GM23248 (cell line): ENCODE measurements at regions of chr3 and their contacts with region 1.

Region 1: GRCh38 chr3:42229942-42230688 is 35.9 kb downstream of the CCK start:
- DNase-seq: peak; percentile 82
- H3K4me3 ChIP-seq: peak overlapping the region; percentile 69
- H3K27ac ChIP-seq: no peak overlapping the region
- H3K4me1 ChIP-seq: no peaks in the 10 kb centered on the region
- H3K27me3 ChIP-seq: no peaks in the 10 kb centered on the region

Region 2: GRCh38 chr3:41863024-41863423 is 367.1 kb before region 1 on chr3:
- in situ Hi-C with region 1: no loop called
- DNase-seq: no peak
- H3K4me3 ChIP-seq: no peak overlapping the region
- H3K27ac ChIP-seq: no peak overlapping the region
- H3K4me1 ChIP-seq: no peaks in the 10 kb centered on the region
- H3K27me3 ChIP-seq: no peaks in the 10 kb centered on the region

Region 3: GRCh38 chr3:41955192-41955591 is 274.9 kb before region 1 on chr3:
- in situ Hi-C with region 1: no loop called
- DNase-seq: no peak
- H3K4me3 ChIP-seq: no peak overlapping the region
- H3K27ac ChIP-seq: no peak overlapping the region
- H3K4me1 ChIP-seq: no peaks in the 10 kb centered on the region
- H3K27me3 ChIP-seq: no peaks in the 10 kb centered on the region

Region 4: GRCh38 chr3:42425736-42426407 is 195.8 kb after region 1 on chr3:
- in situ Hi-C with region 1: no loop called
- DNase-seq: no peak
- H3K4me3 ChIP-seq: no peak overlapping the region
- H3K27ac ChIP-seq: no peak overlapping the region
- H3K4me1 ChIP-seq: no peaks in the 10 kb centered on the region
- H3K27me3 ChIP-seq: no peaks in the 10 kb centered on the region; the same call in 1 of the 2 replicates

Region 5: GRCh38 chr3:42547401-42547945 is 317.4 kb after region 1 on chr3:
- in situ Hi-C with region 1: loop called (anchors 10 kb)
- DNase-seq: peak; percentile 68
- H3K4me3 ChIP-seq: no peak overlapping the region
- H3K27ac ChIP-seq: no peak overlapping the region
- H3K4me1 ChIP-seq: no peaks in the 10 kb centered on the region
- H3K27me3 ChIP-seq: no peaks in the 10 kb centered on the region